Esophagus muscularis mucosa (tissue), 4 donors: ENCODE measurements at regions of chr16 and their contacts with region 1.

Region 1: GRCh38 chr16:74709441-74709877 is 8.8 kb upstream of the MLKL start:
- DNase-seq: no peak
- H3K4me3 ChIP-seq: no peak overlapping the region
- H3K27ac ChIP-seq: no peak overlapping the region
- H3K4me1 ChIP-seq: peaks cover 0 to 4% (median 0%) of the 10 kb centered on the region in 4 donors
- H3K27me3 ChIP-seq: no peaks in the 10 kb centered on the region
- CTCF ChIP-seq: peak in 2 of 3 experiments; percentile 95
- EP300 ChIP-seq: no peak
- POLR2A ChIP-seq: no peak

Region 2: DNA sequence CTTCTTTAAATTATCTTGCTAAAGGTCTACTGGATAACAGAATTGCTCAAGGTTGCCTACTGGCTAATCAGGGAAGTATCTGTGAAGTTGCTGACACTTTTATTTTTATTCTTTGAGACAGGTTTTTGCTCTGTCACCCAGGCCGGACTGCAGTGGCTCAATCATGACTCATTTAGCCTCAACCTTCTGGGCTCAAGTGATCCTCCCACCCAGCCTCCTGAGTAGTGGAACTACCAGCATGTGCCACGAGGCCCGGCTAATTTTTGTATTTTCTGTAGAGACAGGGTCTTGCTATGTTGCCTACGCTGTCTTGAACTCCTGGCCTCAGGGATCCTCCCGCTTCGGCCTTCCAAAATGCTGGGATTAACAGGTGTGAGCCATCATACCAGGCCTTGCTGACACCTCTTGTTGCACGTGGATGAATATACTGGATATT is 145.6 kb before region 1 on chr16:
- intact Hi-C with region 1: no loop called
- DNase-seq: no peak
- H3K4me3 ChIP-seq: no peak overlapping the region
- H3K27ac ChIP-seq: no peak overlapping the region
- H3K4me1 ChIP-seq: peaks cover 26 to 57% (median 45%) of the 10 kb centered on the region in 4 donors
- H3K27me3 ChIP-seq: no peaks in the 10 kb centered on the region
- CTCF ChIP-seq: no peak
- EP300 ChIP-seq: no peak
- POLR2A ChIP-seq: no peak

Region 3: DNA sequence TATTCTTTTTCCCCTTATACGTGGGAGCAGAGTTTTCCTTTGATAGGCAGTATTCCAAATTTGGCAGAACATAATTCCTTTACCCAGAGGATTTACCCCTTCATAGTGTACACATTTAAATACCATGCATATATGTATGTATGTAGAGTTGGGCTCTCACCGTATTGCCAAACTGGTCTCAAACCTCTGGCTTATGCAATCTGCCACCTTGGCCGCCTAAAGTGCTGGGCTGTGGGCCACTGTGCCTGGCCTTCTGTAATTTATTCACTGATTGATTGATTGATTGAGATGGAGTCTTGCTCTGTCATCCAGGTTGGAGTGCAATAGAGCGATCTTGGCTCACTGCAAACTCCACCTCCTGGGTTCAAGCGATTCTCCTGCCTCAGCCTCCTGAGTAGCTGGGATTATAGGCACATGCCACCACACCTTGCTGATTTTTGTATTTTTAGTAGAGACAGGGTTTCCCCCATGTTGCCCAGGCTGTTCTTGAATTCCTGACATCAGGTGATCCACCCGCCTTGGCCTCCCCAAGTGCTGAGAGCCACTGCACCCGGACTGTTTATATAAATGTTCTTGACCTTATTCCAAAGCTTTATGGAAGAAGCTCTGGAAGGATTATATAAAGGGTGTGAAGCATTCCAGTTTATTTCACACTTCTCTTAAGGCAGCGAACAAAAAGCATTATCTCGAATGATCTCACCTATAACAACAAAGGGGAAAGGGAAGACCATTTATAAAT is 117.4 kb before region 1 on chr16:
- intact Hi-C with region 1: no loop called
- DNase-seq: no peak
- H3K4me3 ChIP-seq: no peak overlapping the region
- H3K27ac ChIP-seq: no peak overlapping the region
- H3K4me1 ChIP-seq: peaks cover 7 to 38% (median 25%) of the 10 kb centered on the region in 4 donors
- H3K27me3 ChIP-seq: no peaks in the 10 kb centered on the region
- CTCF ChIP-seq: no peak
- EP300 ChIP-seq: no peak
- POLR2A ChIP-seq: no peak

Region 4: DNA sequence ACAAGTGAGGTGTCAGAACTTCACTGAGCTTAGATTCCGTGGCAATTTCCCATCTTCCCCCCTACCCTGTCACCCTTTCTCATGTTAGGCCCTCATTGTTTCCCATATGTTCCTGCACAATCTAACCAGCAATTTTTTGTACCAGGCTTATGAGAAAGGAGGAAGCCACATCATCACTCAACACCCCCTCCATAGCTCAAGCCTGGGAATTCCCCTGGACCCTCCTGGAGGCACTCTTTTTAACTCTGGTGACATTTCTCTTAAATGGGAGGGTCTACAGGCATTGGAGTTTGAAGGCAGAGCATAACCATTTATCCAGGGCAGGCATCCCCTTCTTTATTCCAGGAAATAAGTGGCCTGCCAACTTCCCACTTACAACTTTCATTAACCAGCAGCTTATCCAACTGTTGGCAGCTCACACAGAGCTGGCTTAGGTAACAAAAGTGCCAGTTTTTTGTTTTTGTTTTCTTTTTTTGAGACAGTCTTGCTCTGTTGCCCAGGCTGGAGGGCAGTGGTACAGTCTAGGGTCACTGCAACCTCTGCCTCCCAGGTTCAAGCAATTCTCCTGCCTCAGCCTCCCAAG is 92.2 kb before region 1 on chr16:
- intact Hi-C with region 1: no loop called
- DNase-seq: no peak
- H3K4me3 ChIP-seq: no peak overlapping the region
- H3K27ac ChIP-seq: no peak overlapping the region
- H3K4me1 ChIP-seq: no peaks in the 10 kb centered on the region
- H3K27me3 ChIP-seq: no peaks in the 10 kb centered on the region
- CTCF ChIP-seq: no peak
- EP300 ChIP-seq: no peak
- POLR2A ChIP-seq: no peak

Region 5: GRCh38 chr16:74650966-74651567 is 58.4 kb before region 1 on chr16:
- intact Hi-C with region 1: no loop called
- DNase-seq: no peak
- H3K4me3 ChIP-seq: no peak overlapping the region
- H3K27ac ChIP-seq: no peak overlapping the region
- H3K4me1 ChIP-seq: peaks cover 0 to 8% (median 5%) of the 10 kb centered on the region in 4 donors
- H3K27me3 ChIP-seq: no peaks in the 10 kb centered on the region
- CTCF ChIP-seq: peak in 2 of 3 experiments; percentile 19 to 46
- EP300 ChIP-seq: no peak
- POLR2A ChIP-seq: no peak

Region 6: GRCh38 chr16:74813109-74813641 is 103.7 kb after region 1 on chr16:
- intact Hi-C with region 1: loop called (anchors 5 kb)
- DNase-seq: no peak
- H3K4me3 ChIP-seq: no peak overlapping the region
- H3K27ac ChIP-seq: no peak overlapping the region
- H3K4me1 ChIP-seq: peaks cover 3 to 5% (median 4%) of the 10 kb centered on the region in 4 donors
- H3K27me3 ChIP-seq: no peaks in the 10 kb centered on the region
- CTCF ChIP-seq: peak; percentile 5 to 92 (median 87)
- EP300 ChIP-seq: no peak
- POLR2A ChIP-seq: no peak

Region 7: GRCh38 chr16:74862741-74863244 is 153.3 kb after region 1 on chr16:
- intact Hi-C with region 1: loop called (anchors 2 kb)
- DNase-seq: no peak
- H3K4me3 ChIP-seq: no peak overlapping the region
- H3K27ac ChIP-seq: no peak overlapping the region
- H3K4me1 ChIP-seq: peaks cover 0 to 8% (median 4%) of the 10 kb centered on the region in 4 donors
- H3K27me3 ChIP-seq: no peaks in the 10 kb centered on the region
- CTCF ChIP-seq: peak; percentile 71 to 82 (median 82)
- EP300 ChIP-seq: no peak
- POLR2A ChIP-seq: no peak